Activated naive CD4-positive, alpha-beta T cell treated with anti-CD3 and anti-CD28 coated beads for 36 hours (primary cell): ENCODE measurements at regions of chr2 and their contacts with region 1.

Region 1: DNA sequence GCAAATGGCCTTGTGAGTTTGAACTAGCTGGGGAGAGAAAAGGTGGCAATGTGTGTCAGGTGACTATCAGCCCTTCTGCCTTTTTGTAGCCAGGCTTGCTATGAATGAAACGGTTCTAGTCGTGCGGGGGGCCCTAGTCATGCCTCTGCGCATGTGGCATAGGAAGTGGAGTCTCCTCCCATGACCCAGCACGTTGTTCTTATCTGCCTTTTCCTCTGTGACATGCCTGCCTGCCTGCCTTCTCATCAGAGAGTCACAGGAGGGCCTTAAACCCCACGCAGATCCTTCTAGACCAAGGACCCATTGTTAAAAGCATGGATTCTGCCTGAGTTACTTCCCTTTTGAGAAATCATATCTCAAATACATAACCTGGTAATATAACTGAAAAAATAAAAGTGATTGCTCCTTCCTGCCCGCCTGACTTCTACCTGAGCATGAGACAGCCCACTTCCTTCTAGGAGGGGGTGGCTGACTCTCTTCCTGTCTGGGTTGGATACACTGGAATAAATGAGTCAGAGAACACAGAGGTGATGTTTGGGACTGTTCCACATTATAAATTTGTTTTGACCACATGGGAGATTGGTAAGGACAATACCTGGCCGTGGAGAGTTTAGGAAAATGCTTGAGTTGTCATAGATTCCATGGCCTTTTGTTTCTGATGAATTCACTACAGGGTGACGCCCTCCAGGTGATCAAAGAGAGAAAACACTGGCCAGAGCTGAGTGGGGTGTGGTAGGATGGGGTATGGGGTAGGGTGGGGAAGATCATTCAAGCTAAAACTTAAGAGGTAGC is 49.8 kb downstream of the FBLN7 start:
- DNase-seq: peak; percentile 92
- H3K4me3 Mint-ChIP-seq: peak overlapping the region; percentile 63
- H3K27ac Mint-ChIP-seq: peak overlapping the region; percentile 99
- H3K4me1 Mint-ChIP-seq: peaks cover 87% of the 10 kb centered on the region
- H3K27me3 Mint-ChIP-seq: no peaks in the 10 kb centered on the region

Region 2: DNA sequence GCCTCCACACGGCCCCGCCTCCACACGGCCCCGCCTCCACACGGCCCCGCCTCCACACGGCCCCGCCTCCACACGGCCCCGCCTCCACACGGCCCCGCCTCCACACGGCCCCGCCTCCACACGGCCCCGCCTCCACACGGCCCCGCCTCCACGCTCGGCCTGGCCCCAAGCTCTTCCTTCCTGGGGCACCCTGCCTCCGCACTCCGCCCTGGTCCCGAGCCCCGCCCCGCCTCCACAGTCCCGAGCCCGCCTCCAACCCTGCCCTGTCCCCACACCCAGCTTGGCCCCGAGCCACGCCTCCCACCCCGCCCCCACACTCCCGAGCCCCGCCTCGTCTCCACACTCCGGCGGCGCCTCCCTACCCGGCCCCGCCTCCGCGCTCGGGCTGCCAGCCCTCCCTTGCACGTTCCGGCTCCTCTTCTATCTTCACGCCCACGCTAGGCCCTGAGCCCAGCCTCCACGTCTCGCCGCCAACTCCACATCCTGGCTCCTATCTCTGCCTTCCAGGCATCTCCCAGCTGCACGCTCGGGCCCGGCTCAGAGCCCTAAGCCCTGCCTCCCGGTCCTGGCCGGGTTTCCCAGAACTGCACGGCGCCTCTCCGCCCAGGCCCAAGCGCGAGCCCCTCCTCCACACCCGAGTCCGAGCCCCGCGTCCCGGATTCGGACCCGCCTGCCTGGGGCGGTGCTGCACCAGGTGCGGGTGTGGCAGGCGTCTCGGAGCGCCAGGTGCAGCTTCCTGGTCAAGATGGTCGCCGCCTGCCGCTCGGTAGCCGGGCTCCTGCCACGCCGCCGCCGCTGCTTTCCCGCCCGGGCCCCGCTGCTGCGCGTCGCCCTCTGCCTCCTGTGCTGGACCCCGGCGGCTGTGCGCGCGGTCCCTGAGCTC is 132.9 kb before region 1 on chr2 and contains the start of gene TMEM87B:
- CTCF ChIA-PET with region 1: no interaction called
- intact Hi-C with region 1: loop called (anchors 1 kb)
- DNase-seq: peak; percentile 99
- H3K4me3 Mint-ChIP-seq: peak within 1 kb of the TSS; percentile 97
- H3K27ac Mint-ChIP-seq: peak within 1 kb of the TSS; percentile 99
- H3K4me1 Mint-ChIP-seq: peaks cover 42% of the 10 kb centered on the region
- H3K27me3 Mint-ChIP-seq: no peaks in the 10 kb centered on the region
- total RNA-seq, gene TMEM87B: 10.5 to 12.0 TPM

Region 3: DNA sequence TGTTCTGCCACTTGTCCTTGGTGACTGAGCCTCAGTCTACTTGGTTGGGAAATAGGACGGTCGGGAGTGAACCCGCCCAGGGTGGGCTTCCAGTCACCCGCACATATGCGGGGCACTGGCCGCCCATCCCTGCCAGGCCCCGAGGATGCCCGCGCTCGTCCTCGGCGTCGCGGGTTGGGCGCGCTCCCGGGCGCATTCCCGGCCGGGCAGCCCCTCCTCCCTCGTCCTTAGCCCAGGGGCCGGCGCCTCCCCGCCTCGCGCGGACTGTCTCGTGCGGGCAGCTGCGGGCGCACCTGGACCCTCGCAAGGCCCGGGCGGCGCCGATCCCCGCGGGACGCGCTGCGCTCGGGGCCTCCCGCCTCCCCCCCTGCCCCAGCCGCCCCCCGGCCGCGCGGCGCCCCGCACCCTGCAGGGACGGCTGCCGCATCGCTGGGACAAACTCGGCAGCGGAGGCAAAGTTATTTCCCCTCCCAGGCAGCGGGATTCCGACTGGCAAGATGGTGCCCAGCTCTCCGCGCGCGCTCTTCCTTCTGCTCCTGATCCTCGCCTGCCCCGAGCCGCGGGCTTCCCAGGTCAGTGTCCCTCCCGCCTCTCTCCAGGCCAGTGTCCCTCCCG is 49.7 kb before region 1 on chr2 and contains the start of gene FBLN7:
- CTCF ChIA-PET with region 1: no interaction called
- intact Hi-C with region 1: loop called (anchors 5 kb)
- DNase-seq: peak; percentile 22
- H3K4me3 Mint-ChIP-seq: peak within 1 kb of the TSS; percentile 62
- H3K27ac Mint-ChIP-seq: peak within 1 kb of the TSS; percentile 55
- H3K4me1 Mint-ChIP-seq: peaks cover 7% of the 10 kb centered on the region
- H3K27me3 Mint-ChIP-seq: peaks cover 23% of the 10 kb centered on the region
- total RNA-seq, gene FBLN7: 34.5 to 39.0 TPM

Region 4: DNA sequence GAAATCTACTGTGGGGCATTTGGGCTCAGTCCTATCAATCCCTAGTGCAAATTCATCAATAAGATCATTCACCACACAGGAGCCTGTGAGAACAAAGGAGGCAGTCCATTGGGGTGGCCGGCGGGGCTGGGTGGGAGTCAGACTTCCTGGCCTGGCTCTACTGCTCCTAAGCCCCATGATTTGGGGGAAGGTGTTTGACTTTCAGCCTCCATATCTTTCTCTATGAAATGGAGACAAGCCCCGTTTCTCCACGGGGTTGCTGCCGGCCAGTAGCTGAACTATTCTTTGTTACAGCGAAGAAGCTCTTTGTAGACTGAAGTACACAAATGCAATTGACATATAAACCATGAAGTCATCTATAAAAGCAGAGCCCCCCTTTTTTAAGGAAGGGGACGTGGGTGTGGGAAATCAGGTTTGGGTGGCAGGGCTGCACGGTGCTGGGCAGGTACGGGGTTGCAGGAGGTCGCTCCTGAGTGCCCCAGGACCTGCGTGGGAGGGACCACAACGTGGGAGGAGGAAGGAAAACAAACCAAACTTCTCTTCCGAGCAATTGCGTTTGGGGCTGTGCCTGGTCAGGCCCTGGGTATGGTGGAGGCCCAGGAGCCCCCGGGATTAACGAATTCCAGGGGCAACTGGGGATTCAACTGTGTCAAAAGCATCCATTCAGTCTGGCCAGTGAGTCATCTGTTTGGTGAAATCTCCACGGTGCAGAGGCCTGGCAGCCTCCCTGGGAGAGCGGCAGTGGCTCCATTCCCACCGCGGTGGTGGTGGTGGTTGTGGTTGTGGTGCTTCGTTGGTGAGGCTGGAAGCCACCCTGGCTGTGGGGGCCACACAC is 31.6 kb before region 1 on chr2:
- CTCF ChIA-PET with region 1: no interaction called
- intact Hi-C with region 1: loop called (anchors 1 kb)
- DNase-seq: peak; percentile 64
- H3K4me3 Mint-ChIP-seq: peak overlapping the region; percentile 43
- H3K27ac Mint-ChIP-seq: peak overlapping the region; percentile 74
- H3K4me1 Mint-ChIP-seq: peaks cover 51% of the 10 kb centered on the region
- H3K27me3 Mint-ChIP-seq: no peaks in the 10 kb centered on the region

Region 5: DNA sequence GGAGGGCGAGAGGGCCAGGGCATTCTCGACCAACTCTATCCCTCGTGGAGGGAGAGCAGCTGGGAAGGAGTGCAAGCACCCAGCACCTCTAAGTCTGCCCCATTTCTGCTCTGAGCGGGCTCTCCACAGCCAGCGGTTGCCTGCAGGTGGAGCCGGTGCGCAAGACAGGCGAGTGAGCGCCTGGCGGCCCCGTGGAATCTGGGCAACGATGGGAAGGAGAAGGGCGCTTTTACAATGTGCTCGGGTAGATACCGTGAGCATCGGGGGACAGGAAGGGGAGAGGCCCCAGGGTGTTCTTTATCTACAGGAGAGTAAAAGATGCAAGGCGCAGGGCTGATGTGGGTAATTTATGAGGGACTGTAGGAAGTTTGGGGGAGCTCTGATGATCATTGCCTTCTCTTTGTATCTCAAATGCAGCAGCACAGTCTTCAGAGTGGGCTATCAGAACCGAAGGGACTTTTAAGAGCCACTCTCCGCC is 293.1 kb after region 1 on chr2:
- CTCF ChIA-PET with region 1: no interaction called
- intact Hi-C with region 1: loop called (anchors 2 kb)
- DNase-seq: peak; percentile 91
- H3K4me3 Mint-ChIP-seq: peak overlapping the region; percentile 95
- H3K27ac Mint-ChIP-seq: peak overlapping the region; percentile 81
- H3K4me1 Mint-ChIP-seq: peaks cover 28% of the 10 kb centered on the region
- H3K27me3 Mint-ChIP-seq: no peaks in the 10 kb centered on the region

Region 6: DNA sequence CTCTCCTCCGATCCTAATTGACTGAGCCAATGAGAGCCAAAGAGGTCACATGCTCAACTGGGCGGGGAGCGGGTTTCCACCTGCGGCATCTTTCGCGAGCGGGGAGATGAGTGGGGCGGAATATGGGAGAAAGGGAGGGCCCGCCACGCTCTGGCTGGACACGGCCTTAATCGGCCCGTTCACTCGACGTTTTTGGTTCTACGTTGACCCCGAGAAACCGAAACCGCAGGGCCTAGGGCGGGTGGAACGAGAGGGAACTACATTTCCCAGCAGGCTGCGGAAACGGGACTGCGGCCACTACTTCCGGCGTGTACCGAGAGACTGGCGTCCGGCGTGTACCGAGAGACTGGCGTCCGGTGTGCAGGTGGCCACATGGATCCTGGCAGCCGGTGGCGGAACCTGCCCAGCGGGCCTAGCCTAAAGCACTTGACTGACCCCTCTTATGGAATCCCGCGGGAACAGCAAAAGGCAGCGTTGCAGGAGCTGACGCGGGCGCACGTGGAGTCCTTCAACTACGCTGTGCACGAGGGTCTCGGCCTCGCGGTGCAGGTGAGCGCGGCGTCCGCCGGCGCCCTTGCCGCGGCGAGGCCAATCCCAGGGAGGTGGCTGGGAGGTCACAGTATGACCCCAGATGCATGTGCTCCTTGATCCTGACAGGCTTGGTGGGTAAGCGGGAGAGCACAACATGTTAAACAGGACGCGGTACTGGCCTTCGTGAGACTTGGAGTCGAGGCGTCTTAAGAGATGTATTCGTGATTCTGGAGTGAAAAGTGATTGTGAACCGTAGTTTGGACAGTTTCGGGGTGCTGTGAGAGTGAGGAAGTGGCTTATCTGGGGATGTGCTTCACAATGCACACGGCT is 354.4 kb after region 1 on chr2 and contains the start of gene POLR1B:
- CTCF ChIA-PET with region 1: no interaction called
- intact Hi-C with region 1: loop called (anchors 1 kb)
- DNase-seq: peak; percentile 82
- H3K4me3 Mint-ChIP-seq: no peak within 1 kb of the TSS
- H3K27ac Mint-ChIP-seq: no peak within 1 kb of the TSS
- H3K4me1 Mint-ChIP-seq: peaks cover 19% of the 10 kb centered on the region
- H3K27me3 Mint-ChIP-seq: no peaks in the 10 kb centered on the region
- total RNA-seq, gene POLR1B: 34.5 to 36.1 TPM